ENCODE measurements at regions of chr5 and their contacts with region 1.

Region 1: GRCh38 chr5:31581498-31582099 is 49.5 kb downstream of the C5orf22 start:
- DNase-seq: peak in 1 of 3 donors; percentile 2
- ATAC-seq: no peak
- H3K4me3 ChIP-seq: no peak overlapping the region
- H3K4me1 ChIP-seq: no peaks in the 10 kb centered on the region
- CTCF ChIP-seq: no peak

Region 2: GRCh38 chr5:31531888-31532710 is 49.5 kb before region 1 on chr5 and contains the starts of genes C5orf22 and DROSHA:
- intact Hi-C with region 1: no loop called
- DNase-seq: peak; percentile 96 to 98 (median 96)
- ATAC-seq: peak; percentile 98
- H3K4me3 ChIP-seq: peak within 1 kb of the TSS; percentile 62
- H3K4me1 ChIP-seq: peaks cover 18% of the 10 kb centered on the region
- CTCF ChIP-seq: no peak
- total RNA-seq, gene C5orf22: 24.0 to 26.7 (median 24.6) TPM
- total RNA-seq, gene DROSHA: 46.6 to 72.4 (median 53.3) TPM

Region 3: DNA sequence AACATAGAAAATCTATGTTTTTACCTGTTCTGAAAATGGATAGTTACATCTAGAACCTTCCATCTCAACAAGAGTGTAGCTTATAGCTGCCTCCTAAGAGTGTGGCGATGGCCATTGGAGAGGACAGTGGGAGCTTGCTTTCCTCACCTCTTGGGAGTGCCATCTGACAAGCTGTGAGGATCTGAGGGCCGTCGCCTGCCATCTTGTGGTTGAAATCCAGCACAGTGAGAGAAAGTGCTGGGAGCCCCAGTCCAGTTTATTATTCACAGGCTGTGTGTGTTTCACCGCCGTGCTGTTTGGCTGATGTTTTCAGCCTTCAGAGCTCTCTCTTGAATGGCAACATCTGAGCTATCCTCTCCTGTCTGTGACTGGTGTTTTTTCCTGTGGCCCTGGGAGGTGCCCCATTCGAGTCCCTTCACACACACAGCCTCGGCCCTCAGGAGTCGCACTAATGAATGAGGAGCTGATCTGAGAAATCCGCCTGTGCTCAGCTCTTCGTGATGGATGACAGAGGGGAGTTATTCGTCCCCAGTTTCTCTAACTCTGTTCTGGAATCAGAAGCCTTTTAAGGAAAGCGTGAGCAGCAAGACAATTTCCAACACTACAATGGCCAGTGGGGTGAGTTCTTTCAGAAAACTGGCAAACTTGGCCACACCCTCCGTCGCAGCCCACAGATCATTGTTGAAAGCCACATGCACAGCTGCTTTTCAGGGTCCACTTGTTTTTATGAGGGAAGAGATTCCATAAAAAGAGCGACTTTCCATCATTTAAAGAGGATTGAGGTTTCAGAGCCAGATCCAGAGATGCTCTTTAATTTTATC is 227.7 kb after region 1 on chr5:
- intact Hi-C with region 1: loop called (anchors 5 kb)
- DNase-seq: peak in 2 of 3 donors; percentile 42 to 61
- ATAC-seq: peak; percentile 62
- H3K4me3 ChIP-seq: no peak overlapping the region
- H3K4me1 ChIP-seq: no peaks in the 10 kb centered on the region
- CTCF ChIP-seq: no peak

Region 4: DNA sequence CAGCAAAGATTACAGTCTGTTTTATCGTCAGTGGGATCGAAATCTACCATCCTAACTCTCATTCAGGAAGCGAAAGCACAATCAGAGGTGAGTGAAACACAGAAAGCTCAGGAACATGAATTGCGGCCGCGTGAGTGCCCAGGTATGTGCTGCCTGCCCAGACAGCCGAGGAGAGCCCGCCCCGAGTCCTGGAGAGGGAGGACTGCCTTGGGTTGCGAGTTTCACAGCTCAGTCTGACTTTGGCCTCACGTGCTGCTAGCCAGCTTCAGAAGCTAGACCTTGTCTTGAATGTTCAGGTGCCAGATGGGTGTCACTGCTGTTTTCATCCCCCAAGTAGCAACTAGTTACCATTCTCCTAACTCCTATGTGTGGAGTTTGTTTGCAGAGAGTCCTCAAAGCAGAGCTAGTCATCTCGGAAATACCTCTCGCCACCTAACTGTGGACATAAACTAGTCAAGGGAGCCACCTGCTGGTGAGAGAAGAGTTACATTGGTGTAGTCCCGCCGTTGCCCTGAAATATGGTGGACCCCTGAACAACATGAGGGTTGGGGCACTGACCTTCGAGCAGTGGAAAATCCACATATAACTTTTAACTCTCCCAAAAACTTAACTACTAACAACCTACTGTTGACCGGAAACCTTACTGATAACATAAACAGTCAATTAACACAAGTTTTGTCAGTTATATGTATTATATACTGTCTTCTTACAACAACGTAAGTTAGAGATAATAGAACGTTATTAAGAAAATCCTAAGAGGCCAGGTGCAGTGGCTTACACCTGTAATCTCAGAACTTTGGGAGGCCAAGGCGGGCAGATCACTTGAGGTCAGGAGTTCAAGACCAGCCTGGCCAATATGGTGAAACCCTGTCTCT is 511.6 kb after region 1 on chr5:
- intact Hi-C with region 1: loop called in 1 of 2 experiments (anchors 10 kb)
- DNase-seq: peak in 1 of 3 donors; percentile 82
- ATAC-seq: peak; percentile 79
- H3K4me3 ChIP-seq: no peak overlapping the region
- H3K4me1 ChIP-seq: no peaks in the 10 kb centered on the region
- CTCF ChIP-seq: no peak